ENCODE measurements at regions of chr14 and their contacts with region 1.

Region 1: DNA sequence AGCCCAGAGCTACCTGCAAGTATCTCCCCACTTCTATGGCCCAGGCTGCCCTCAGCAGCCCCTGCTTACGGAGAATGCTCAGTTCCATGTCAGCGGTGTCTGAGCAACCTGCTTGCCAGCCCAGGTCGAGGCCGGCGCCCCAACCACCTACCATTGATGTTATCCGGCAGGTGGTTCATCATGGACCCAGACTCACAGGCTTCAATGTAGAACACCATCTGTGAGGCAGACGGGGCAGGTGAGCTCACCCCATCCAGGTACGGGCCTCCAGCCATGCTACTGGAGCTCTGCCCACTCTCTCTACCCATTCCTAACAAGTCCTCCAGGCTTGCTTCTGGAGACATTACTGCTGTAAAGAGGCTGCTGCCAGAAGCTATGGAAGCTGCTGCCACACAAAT is 35.8 kb downstream of the LGMN start:
- DNase-seq: no peak
- ATAC-seq: no peak
- H3K4me3 Mint-ChIP-seq: no peak overlapping the region
- H3K27ac Mint-ChIP-seq: no peak overlapping the region
- H3K4me1 Mint-ChIP-seq: no peaks in the 10 kb centered on the region
- H3K27me3 Mint-ChIP-seq: no peaks in the 10 kb centered on the region
- CTCF ChIP-seq: no peak

Region 2: DNA sequence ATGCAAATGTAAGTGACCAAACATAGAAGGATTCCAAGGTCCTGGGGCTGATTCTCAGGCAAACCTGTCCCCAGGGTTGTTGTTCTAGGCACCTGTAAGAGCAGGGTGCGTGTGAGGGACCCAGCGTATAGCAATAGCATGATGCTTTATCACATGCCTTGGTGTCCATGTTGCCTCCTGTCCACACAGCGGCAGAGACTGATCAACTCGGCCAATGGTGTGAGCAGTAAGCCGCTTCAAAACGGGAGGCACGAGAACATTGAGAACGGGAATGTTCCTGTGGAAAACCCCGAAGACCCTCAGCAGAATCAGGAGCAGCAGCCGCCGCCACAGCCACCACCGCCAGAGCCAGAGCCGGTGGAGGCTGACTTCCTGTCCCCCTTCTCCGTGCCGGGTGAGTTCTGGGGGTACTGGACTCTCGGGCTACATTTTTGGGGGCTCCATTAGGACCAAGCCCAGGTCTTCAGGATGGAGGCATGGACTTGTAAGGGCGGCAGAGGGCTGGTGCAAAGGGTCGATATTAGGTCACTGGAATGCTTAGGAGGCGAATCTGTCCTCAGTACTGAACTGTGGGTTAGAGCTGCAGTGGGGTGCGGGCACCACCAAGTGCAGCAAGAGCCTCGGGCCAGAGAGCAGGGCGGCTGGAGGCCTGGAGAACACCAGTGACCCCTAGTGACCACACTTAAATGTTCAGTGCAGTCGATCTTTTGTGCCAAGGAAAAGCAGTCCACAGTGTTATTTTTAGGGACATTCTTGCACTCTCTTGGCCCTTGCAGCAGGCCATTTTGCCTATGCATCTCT is 256.2 kb before region 1 on chr14:
- CTCF ChIA-PET with region 1: no interaction called
- POLR2A ChIA-PET with region 1: no interaction called
- intact Hi-C with region 1: no loop called
- DNase-seq: no peak
- ATAC-seq: peak; percentile 77
- H3K4me3 Mint-ChIP-seq: no peak overlapping the region
- H3K27ac Mint-ChIP-seq: no peak overlapping the region
- H3K4me1 Mint-ChIP-seq: peaks cover 6% of the 10 kb centered on the region
- H3K27me3 Mint-ChIP-seq: peaks cover 5% of the 10 kb centered on the region
- CTCF ChIP-seq: no peak

Region 3: GRCh38 chr14:92686900-92687444 is 25.7 kb before region 1 on chr14:
- CTCF ChIA-PET with region 1: interaction called, 11 read pairs
- POLR2A ChIA-PET with region 1: no interaction called
- intact Hi-C with region 1: loop called (anchors 1 kb)
- DNase-seq: peak; percentile 83
- ATAC-seq: peak; percentile 90
- H3K4me3 Mint-ChIP-seq: no peak overlapping the region
- H3K27ac Mint-ChIP-seq: no peak overlapping the region
- H3K4me1 Mint-ChIP-seq: no peaks in the 10 kb centered on the region
- H3K27me3 Mint-ChIP-seq: no peaks in the 10 kb centered on the region
- CTCF ChIP-seq: peak; percentile 89